ENCODE measurements at regions of chr14 and their contacts with region 1.

Region 1: GRCh38 chr14:104800015-104800770 is 708 bp upstream of the ZBTB42 start:
- DNase-seq: peak in 1 of 2 donors; percentile 93
- H3K4me3 ChIP-seq: peak overlapping the region; percentile 75 to 77
- H3K27ac ChIP-seq: peak overlapping the region; percentile 96 to 99
- H3K4me1 ChIP-seq: peaks cover 17 to 20% of the 10 kb centered on the region in 2 donors
- H3K27me3 ChIP-seq: no peaks in the 10 kb centered on the region
- CTCF ChIP-seq: peak; percentile 46 to 62 (median 52)

Region 2: DNA sequence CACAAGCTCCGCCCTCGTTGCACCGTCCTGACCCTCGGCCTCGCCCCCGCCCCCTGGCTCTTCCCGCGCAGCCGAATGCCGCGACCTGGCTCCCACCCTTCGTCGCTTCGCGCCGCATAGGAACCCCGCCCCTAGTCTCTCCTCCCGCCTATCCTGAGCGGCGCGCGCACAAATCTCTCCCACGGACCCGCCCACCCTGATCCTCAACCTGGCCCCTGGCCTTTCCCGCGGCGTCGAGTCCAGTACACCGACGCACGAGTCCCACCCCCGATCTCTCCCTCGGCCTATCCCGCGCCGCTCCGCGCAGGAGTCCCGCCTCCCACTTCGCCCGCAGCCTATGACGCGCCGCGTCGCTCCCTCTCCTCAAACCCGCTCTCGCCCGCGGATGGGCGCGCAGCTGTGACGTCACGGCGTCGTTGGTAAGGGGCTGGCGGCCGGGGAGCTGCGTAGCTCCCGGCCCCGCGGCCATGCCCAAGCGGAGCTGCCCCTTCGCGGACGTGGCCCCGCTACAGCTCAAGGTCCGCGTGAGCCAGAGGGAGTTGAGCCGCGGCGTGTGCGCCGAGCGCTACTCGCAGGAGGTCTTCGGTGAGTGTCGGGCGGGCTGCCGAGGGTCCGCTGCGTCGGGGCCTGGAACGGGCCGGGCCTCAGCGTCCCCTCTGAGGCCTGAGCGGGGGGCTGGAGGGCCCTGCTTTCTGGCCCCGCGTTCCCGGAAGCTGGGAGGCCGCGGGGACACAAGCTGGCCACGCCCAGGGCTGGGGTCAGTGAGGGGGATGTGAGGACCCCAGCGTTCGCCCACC is 47.3 kb before region 1 on chr14 and contains the start of gene SIVA1:
- intact Hi-C with region 1: loop called (anchors 1 kb)
- DNase-seq: peak; percentile 98 to 100
- H3K4me3 ChIP-seq: peak within 1 kb of the TSS; percentile 89 to 99
- H3K27ac ChIP-seq: peak within 1 kb of the TSS; percentile 81 to 95
- H3K4me1 ChIP-seq: peaks cover 40 to 55% of the 10 kb centered on the region in 2 donors
- H3K27me3 ChIP-seq: no peaks in the 10 kb centered on the region
- CTCF ChIP-seq: no peak
- total RNA-seq, gene SIVA1: 410 TPM

Region 3: GRCh38 chr14:104826189-104826860 is 26.1 kb after region 1 on chr14:
- intact Hi-C with region 1: loop called (anchors 1 kb)
- DNase-seq: peak; percentile 54 to 94
- H3K4me3 ChIP-seq: peak overlapping the region; percentile 63 to 92
- H3K27ac ChIP-seq: peak overlapping the region; percentile 7 to 59
- H3K4me1 ChIP-seq: peaks cover 8 to 12% of the 10 kb centered on the region in 2 donors
- H3K27me3 ChIP-seq: no peaks in the 10 kb centered on the region
- CTCF ChIP-seq: peak; percentile 56 to 83 (median 79)

Measured in ascending aorta (tissue), 2 donors.